ENCODE measurements at regions of chr6 and their contacts with region 1.

Region 1: DNA sequence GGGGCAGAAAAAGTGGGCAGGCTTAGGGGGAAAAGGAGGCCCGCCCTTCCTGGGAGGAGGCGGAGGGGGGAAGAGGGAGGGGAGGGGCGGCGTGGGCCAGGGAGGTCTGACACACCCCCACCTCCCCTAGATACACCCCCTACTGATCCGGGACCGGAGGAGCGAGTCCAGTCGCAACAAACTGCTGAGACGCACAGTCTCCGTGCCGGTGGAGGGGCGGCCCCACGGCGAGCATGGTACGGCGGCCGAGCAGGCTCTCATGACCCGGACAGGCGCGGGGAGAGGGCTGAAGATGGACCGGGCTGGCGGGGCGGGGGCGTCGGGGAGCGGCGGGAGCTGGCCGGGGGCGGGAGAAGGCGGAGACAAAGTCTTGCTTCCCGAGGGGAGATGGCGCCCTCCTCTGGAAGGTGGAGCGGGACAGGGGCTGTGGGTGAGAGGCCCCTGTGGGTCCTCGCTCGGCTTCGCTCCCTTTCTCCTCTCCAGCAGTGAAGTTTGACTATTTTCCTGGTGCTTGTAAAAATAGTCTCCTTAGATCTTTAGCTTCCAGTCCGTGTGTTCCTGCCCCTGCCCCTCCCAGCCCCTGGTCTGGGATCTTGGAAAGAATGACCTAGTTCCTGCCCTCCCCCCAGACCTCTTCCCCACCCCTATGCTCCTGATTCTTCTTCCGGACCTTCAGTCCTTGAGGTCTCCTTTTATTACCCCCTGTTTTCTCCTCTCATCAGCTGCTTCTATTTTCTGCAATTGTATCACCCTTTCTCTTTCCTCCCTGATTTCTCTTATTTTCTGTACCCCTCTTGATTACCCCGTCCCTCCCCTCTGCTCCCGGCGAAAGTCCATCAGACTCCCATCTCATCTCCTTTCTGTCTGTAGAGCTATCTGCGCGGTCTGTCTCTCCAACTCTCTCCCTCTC is 6.1 kb downstream of the SYNGAP1 start:
- DNase-seq: peak; percentile 78 to 90 (median 80)
- H3K4me3 ChIP-seq: peak overlapping the region; percentile 69
- H3K4me3 Mint-ChIP-seq: peak overlapping the region; percentile 84 to 93 (median 91)
- H3K27ac ChIP-seq: peak overlapping the region; percentile 88
- H3K27ac Mint-ChIP-seq: peak overlapping the region; percentile 97 to 100 (median 99)
- H3K4me1 ChIP-seq: peaks cover 48% of the 10 kb centered on the region
- H3K4me1 Mint-ChIP-seq: peaks cover 66 to 73% (median 71%) of the 10 kb centered on the region in 3 donors
- H3K27me3 ChIP-seq: no peaks in the 10 kb centered on the region
- H3K27me3 Mint-ChIP-seq: peaks cover 0 to 11% of the 10 kb centered on the region in 2 donors

Region 2: GRCh38 chr6:33391278-33391921 is 34.5 kb before region 1 on chr6 and contains the start of gene KIFC1:
- CTCF ChIA-PET with region 1: interaction called, 14 read pairs
- POLR2A ChIA-PET with region 1: interaction called, 3 read pairs
- DNase-seq: peak; percentile 99 to 100 (median 99)
- H3K4me3 ChIP-seq: peak within 1 kb of the TSS; percentile 78
- H3K4me3 Mint-ChIP-seq: peak within 1 kb of the TSS; percentile 72 to 88 (median 86)
- H3K27ac ChIP-seq: peak within 1 kb of the TSS; percentile 79
- H3K27ac Mint-ChIP-seq: peak within 1 kb of the TSS; percentile 75 to 98 (median 98)
- H3K4me1 ChIP-seq: peaks cover 22% of the 10 kb centered on the region
- H3K4me1 Mint-ChIP-seq: peaks cover 22 to 37% (median 36%) of the 10 kb centered on the region in 3 donors
- H3K27me3 ChIP-seq: no peaks in the 10 kb centered on the region
- H3K27me3 Mint-ChIP-seq: no peaks in the 10 kb centered on the region
- total RNA-seq, gene KIFC1: 51.6 to 52.7 TPM

Region 3: GRCh38 chr6:33410050-33410710 is 15.7 kb before region 1 on chr6:
- CTCF ChIA-PET with region 1: interaction called, 10 read pairs
- POLR2A ChIA-PET with region 1: interaction called, 13 read pairs
- DNase-seq: peak; percentile 95 to 99 (median 98)
- H3K4me3 ChIP-seq: peak overlapping the region; percentile 87
- H3K4me3 Mint-ChIP-seq: peak overlapping the region; percentile 85 to 94 (median 91)
- H3K27ac ChIP-seq: peak overlapping the region; percentile 95
- H3K27ac Mint-ChIP-seq: peak overlapping the region; percentile 94 to 100 (median 98)
- H3K4me1 ChIP-seq: peaks cover 42% of the 10 kb centered on the region
- H3K4me1 Mint-ChIP-seq: peaks cover 47 to 55% (median 52%) of the 10 kb centered on the region in 3 donors
- H3K27me3 ChIP-seq: no peaks in the 10 kb centered on the region
- H3K27me3 Mint-ChIP-seq: no peaks in the 10 kb centered on the region